CD4-positive, alpha-beta memory T cell (primary cell): ENCODE measurements at regions of chr6 and their contacts with region 1.

Region 1: GRCh38 chr6:156564127-156564806 is 212.9 kb upstream of the ARID1B start:
- DNase-seq: peak; percentile 58 to 66 (median 63)
- H3K4me3 ChIP-seq: no peak overlapping the region
- H3K4me3 Mint-ChIP-seq: peak overlapping the region in 1 of 8 donors; percentile 12
- H3K27ac ChIP-seq: no peak overlapping the region
- H3K27ac Mint-ChIP-seq: peak overlapping the region in 1 of 7 donors; percentile 24
- H3K4me1 ChIP-seq: peaks cover 7% of the 10 kb centered on the region
- H3K4me1 Mint-ChIP-seq: peaks cover 0 to 4% (median 1%) of the 10 kb centered on the region in 4 donors
- H3K27me3 ChIP-seq: no peaks in the 10 kb centered on the region
- H3K27me3 Mint-ChIP-seq: peaks cover 6 to 13% of the 10 kb centered on the region in 2 donors

Region 2: DNA sequence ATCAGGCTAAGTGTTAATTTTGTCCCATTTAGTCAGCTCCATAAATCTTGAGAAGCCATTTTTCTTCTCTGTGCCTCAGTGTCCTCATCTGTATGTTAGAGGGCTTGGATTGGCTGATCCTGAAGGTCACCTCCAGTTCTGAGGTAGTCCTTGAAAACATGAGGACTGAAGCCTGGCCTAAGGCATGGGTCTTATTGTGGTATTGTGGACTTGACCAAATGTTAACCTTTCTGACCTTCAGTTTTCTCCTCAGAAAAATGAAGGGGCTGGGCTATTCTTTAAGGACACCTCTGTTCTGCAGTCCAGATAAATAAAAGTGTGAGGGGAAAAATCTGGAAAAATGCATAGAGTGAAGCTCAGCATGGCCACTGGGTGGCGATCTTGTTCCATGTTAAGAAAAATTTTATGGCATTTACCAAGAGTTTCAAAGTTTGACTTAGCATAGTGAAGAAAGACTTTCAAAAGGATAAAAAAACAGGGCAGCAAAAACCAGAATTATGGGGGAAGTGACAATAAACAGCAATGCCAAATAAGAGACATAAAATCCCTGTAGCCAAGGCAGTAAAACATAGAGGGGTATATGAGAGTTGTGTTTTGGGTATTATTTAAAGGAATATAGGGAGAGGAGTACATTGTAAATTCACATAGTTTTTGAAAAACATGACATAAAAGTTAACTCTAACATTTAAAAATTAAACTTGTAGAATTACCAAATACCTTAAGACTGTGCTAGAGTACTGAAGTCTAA is 1236.8 kb before region 1 on chr6:
- CTCF ChIA-PET with region 1: interaction called, 4 read pairs
- POLR2A ChIA-PET with region 1: no interaction called
- intact Hi-C with region 1: loop called (anchors 1 kb)
- DNase-seq: peak; percentile 47 to 65 (median 62)
- H3K4me3 ChIP-seq: no peak overlapping the region
- H3K4me3 Mint-ChIP-seq: no peak overlapping the region
- H3K27ac ChIP-seq: no peak overlapping the region
- H3K27ac Mint-ChIP-seq: peak overlapping the region in 2 of 7 donors; percentile 0 to 64
- H3K4me1 ChIP-seq: no peaks in the 10 kb centered on the region
- H3K4me1 Mint-ChIP-seq: peaks cover 0 to 5% (median 3%) of the 10 kb centered on the region in 4 donors
- H3K27me3 ChIP-seq: no peaks in the 10 kb centered on the region
- H3K27me3 Mint-ChIP-seq: peaks cover 0 to 1% of the 10 kb centered on the region in 2 donors

Region 3: DNA sequence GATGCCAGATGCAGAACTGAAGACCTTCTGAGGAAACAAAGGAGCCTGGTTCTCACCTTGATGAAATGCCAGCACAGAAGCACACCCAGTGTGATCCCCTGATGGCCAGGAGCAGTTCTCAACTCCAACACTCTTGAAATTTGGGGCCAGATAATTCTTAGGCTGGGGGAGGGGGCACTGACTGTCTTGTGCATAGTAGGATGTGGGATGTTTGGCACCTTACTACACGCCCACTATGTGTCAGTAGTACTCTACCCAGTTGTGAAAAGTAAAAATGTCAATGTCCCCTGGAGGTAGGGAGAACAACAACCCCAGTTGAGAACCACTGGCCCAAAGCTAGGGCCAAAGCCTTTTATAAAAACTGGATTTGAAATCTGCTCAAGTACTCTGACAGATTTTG is 185.4 kb before region 1 on chr6:
- CTCF ChIA-PET with region 1: interaction called, 3 read pairs
- POLR2A ChIA-PET with region 1: no interaction called
- intact Hi-C with region 1: loop called (anchors 5 kb)
- DNase-seq: peak in 4 of 5 donors; percentile 18 to 41 (median 26)
- H3K4me3 ChIP-seq: no peak overlapping the region
- H3K4me3 Mint-ChIP-seq: no peak overlapping the region
- H3K27ac ChIP-seq: no peak overlapping the region
- H3K27ac Mint-ChIP-seq: peak overlapping the region in 4 of 7 donors; percentile 39 to 65 (median 45)
- H3K4me1 ChIP-seq: no peaks in the 10 kb centered on the region
- H3K4me1 Mint-ChIP-seq: peaks cover 0 to 13% (median 2%) of the 10 kb centered on the region in 4 donors
- H3K27me3 ChIP-seq: no peaks in the 10 kb centered on the region
- H3K27me3 Mint-ChIP-seq: peaks cover 0 to 3% of the 10 kb centered on the region in 2 donors

Region 4: DNA sequence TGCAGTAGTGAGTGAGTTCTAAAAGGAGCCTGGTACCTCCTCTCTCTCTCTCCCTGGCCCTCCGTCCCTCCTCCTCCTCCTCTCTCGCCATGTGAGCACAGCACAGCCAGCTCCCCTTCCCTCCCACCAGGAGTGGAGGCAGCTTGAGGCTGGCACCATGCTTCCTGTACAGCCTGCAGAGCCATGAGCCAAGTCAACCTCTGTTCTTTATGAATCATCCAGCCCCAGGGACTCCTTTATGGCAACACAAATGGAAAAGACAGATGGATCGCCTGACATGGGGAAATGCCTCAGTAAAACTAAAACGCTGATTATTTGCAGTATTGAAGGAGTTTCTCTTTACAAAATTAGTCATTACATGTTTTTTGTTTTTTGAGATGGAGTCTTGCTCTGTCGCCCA is 20.8 kb before region 1 on chr6:
- CTCF ChIA-PET with region 1: no interaction called
- POLR2A ChIA-PET with region 1: no interaction called
- intact Hi-C with region 1: no loop called
- DNase-seq: no peak
- H3K4me3 ChIP-seq: no peak overlapping the region
- H3K4me3 Mint-ChIP-seq: no peak overlapping the region
- H3K27ac ChIP-seq: no peak overlapping the region
- H3K27ac Mint-ChIP-seq: no peak overlapping the region
- H3K4me1 ChIP-seq: no peaks in the 10 kb centered on the region
- H3K4me1 Mint-ChIP-seq: no peaks in the 10 kb centered on the region
- H3K27me3 ChIP-seq: no peaks in the 10 kb centered on the region
- H3K27me3 Mint-ChIP-seq: peaks cover 8 to 12% of the 10 kb centered on the region in 2 donors

Region 5: GRCh38 chr6:156686995-156687788 is 122.9 kb after region 1 on chr6:
- CTCF ChIA-PET with region 1: interaction called, 3 read pairs
- POLR2A ChIA-PET with region 1: no interaction called
- intact Hi-C with region 1: loop called (anchors 1 kb)
- DNase-seq: peak; percentile 80 to 90 (median 85)
- H3K4me3 ChIP-seq: peak overlapping the region; percentile 68 to 92
- H3K4me3 Mint-ChIP-seq: peak overlapping the region; percentile 88 to 95 (median 92)
- H3K27ac ChIP-seq: peak overlapping the region; percentile 95
- H3K27ac Mint-ChIP-seq: peak overlapping the region; percentile 88 to 98 (median 97)
- H3K4me1 ChIP-seq: peaks cover 14% of the 10 kb centered on the region
- H3K4me1 Mint-ChIP-seq: peaks cover 10 to 24% (median 15%) of the 10 kb centered on the region in 4 donors
- H3K27me3 ChIP-seq: peaks cover 4% of the 10 kb centered on the region
- H3K27me3 Mint-ChIP-seq: no peaks in the 10 kb centered on the region

Region 6: DNA sequence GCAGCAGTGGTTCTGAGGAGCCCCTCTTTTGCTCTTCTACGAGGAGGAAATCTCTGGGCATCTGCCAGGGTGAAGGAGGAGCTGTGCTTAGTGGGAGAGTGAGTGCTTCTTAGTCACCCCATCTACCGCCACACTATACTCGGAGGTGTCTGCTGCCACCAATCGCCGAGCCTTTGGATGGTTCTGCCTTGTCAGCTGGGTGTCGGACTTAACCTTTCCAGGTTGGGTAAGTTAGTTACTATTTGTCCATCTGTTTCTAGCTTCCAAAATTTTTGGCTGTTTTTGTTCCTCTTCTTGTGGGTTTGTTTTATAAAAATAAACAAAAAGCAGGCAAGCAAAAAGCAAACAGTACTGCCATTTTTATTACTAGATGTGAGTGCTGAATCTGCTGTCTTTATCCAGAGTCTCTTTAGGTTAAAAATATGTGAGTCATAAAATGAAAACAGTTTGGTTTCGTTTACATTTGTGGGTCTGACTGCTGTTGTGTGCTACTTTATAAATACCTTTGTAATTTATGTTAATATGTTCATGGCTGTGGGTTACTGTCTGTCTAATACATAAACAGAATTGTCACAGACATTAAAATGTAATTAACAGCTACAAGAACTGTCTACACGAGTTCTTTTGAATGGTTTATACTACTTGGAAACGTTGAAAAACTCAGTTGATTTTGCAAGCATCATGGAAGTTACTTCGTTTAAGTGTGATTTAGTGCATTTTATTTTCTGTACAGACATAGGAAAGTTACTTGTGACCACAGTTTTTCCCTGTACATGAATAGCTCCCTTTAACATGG is 302.2 kb after region 1 on chr6:
- CTCF ChIA-PET with region 1: no interaction called
- POLR2A ChIA-PET with region 1: no interaction called
- intact Hi-C with region 1: loop called (anchors 2 kb)
- DNase-seq: peak in 2 of 5 donors; percentile 13 to 21
- H3K4me3 ChIP-seq: no peak overlapping the region
- H3K4me3 Mint-ChIP-seq: peak overlapping the region in 5 of 8 donors; percentile 14 to 64 (median 37)
- H3K27ac ChIP-seq: no peak overlapping the region
- H3K27ac Mint-ChIP-seq: peak overlapping the region in 6 of 7 donors; percentile 36 to 68 (median 54)
- H3K4me1 ChIP-seq: peaks cover 61% of the 10 kb centered on the region
- H3K4me1 Mint-ChIP-seq: peaks cover 65 to 96% (median 82%) of the 10 kb centered on the region in 4 donors
- H3K27me3 ChIP-seq: no peaks in the 10 kb centered on the region
- H3K27me3 Mint-ChIP-seq: no peaks in the 10 kb centered on the region

Region 7: GRCh38 chr6:157021344-157021992 is 457.2 kb after region 1 on chr6:
- CTCF ChIA-PET with region 1: no interaction called
- POLR2A ChIA-PET with region 1: no interaction called
- intact Hi-C with region 1: loop called (anchors 1 kb)
- DNase-seq: peak; percentile 88 to 93 (median 91)
- H3K4me3 ChIP-seq: peak overlapping the region; percentile 54 to 86
- H3K4me3 Mint-ChIP-seq: peak overlapping the region; percentile 95 to 98 (median 96)
- H3K27ac ChIP-seq: peak overlapping the region; percentile 98
- H3K27ac Mint-ChIP-seq: peak overlapping the region; percentile 97 to 100 (median 99)
- H3K4me1 ChIP-seq: peaks cover 31% of the 10 kb centered on the region
- H3K4me1 Mint-ChIP-seq: peaks cover 30 to 55% (median 44%) of the 10 kb centered on the region in 4 donors
- H3K27me3 ChIP-seq: no peaks in the 10 kb centered on the region
- H3K27me3 Mint-ChIP-seq: no peaks in the 10 kb centered on the region